AG04449 (cell line): ENCODE measurements at regions of chr1 and their contacts with region 1.

Region 1: GRCh38 chr1:226201029-226201593 is 14.6 kb upstream of the ACBD3 start:
- DNase-seq: no peak
- H3K4me3 ChIP-seq: no peak overlapping the region
- CTCF ChIP-seq: peak; percentile 26

Region 2: DNA sequence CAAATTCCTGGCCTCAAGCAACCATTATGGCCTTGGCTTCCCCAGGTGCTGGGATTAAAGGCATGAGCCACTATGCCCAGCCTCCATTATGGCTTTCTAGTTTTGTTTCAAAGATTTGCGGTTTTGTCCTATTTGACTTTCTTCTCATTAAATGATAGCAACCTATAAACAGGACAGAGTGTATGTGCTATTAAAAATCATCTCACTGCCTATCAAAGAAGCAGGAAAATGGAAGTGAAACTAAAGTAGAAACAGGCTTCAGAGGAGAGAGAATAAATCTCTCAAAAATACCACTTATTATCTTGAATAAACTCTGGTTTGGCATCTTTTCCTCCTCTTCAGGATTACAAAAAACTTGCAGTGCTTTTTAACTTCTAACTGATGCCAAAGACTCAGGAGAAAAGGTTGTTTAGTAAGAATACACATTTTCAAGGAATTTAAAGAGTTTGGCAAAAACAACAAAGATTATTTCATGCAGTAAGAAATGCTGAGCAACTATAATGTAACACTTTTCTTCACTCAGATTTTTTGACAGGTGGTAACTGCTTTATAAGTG is 43.3 kb before region 1 on chr1:
- CTCF ChIA-PET with region 1: interaction called, 10 read pairs
- POLR2A ChIA-PET with region 1: no interaction called
- DNase-seq: no peak
- H3K4me3 ChIP-seq: no peak overlapping the region
- CTCF ChIP-seq: no peak

Region 3: DNA sequence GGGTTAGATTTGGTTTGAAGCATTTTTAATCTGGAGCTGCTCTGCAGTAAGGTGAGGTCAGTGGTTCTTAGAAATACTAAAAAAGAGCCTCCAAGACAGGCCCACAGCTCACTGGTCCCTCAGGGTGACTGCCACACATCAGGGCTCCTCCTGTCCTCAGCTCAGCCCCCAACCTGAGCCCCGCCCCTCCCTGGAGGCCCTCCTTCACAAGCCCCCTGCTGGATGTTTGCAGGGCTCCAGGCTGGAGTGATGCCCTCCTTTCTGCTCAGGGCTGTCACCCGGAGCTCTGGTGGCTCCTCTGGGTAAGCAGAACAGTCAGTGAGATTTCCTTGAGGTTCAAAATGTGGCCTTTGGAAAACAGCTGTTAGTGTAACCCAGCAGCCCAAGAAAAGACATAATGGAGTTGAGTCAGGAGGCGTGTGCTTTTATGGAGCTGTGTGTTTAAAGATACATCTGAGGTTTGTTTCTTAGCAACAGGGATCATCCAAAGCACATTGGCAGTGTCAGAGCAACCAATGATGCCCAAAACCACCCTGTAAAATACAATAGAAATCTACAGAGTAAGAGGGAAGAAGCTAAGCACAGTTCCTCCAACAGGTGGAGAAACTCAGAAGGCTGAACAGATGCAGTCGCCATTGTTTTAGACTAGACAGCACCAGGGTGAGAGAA is 368.9 kb after region 1 on chr1:
- CTCF ChIA-PET with region 1: no interaction called
- POLR2A ChIA-PET with region 1: no interaction called
- DNase-seq: no peak
- H3K4me3 ChIP-seq: no peak overlapping the region
- CTCF ChIP-seq: no peak